ENCODE measurements at regions of chr14 and their contacts with region 1.

Region 1: GRCh38 chr14:34671716-34672115 is 41.8 kb upstream of the SNX6 start:
- DNase-seq: no peak
- ATAC-seq: no peak
- H3K4me3 ChIP-seq: no peak overlapping the region
- H3K27ac ChIP-seq: no peak overlapping the region
- H3K4me1 ChIP-seq: no peaks in the 10 kb centered on the region; the same call in 1 of the 2 replicates
- H3K27me3 ChIP-seq: no peaks in the 10 kb centered on the region
- CTCF ChIP-seq: no peak
- POLR2A ChIP-seq: no peak
- RAD21 ChIP-seq: no peak

Region 2: GRCh38 chr14:34522496-34522895 is 149.2 kb before region 1 on chr14:
- CTCF ChIA-PET with region 1: no interaction called
- POLR2A ChIA-PET with region 1: no interaction called
- dilution Hi-C with region 1: no loop called
- in situ Hi-C with region 1: no loop called
- intact Hi-C with region 1: no loop called
- DNase-seq: no peak
- ATAC-seq: no peak
- H3K4me3 ChIP-seq: no peak overlapping the region
- H3K27ac ChIP-seq: no peak overlapping the region
- H3K4me1 ChIP-seq: no peaks in the 10 kb centered on the region
- H3K27me3 ChIP-seq: no peaks in the 10 kb centered on the region
- CTCF ChIP-seq: no peak
- POLR2A ChIP-seq: no peak
- RAD21 ChIP-seq: no peak

Region 3: DNA sequence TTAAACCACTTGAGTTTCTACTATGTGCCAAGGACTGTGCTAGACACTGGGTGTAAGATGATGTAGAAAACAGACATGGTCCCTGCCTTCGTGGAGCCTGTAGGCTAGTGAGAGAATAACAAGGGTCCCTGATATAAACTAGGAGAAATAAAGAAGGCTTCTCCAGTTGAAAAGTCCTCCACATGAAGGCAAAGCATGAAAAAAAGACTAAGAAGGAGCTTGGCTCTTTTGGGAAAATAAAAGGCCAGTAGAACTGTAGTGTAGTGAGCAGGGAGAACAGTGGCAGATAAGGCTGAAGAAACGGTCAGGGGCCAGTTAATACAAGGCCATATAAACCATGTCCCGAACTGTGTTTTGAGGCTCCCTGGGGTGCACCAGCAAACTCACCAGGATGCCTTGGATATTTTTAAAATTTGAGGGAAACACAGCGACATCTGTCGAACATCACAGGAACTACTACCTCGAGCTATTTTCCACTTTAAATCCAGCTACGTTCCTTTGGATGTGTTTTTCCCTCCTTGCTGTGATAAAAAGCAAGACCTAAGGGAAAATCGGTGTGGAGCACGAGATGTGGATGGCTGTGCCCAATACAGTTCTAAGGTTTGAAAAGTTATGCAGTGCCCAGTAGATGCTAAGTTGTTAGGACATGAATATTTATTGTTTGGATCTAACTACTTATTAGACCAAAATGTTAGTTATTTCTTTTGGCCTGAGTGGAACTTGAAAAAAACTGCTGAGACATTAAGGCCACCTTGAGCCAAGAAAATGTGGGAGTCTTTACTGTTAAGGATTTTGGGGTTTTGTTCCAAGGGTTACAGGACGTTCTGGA is 51.2 kb after region 1 on chr14:
- CTCF ChIA-PET with region 1: interaction called, 11 read pairs
- POLR2A ChIA-PET with region 1: no interaction called
- dilution Hi-C with region 1: no loop called
- in situ Hi-C with region 1: no loop called
- intact Hi-C with region 1: loop called (anchors 1 kb)
- DNase-seq: peak; percentile 60
- ATAC-seq: peak; percentile 89
- H3K4me3 ChIP-seq: no peak overlapping the region
- H3K27ac ChIP-seq: no peak overlapping the region
- H3K4me1 ChIP-seq: peaks cover 2% of the 10 kb centered on the region; the same call in 1 of the 2 replicates
- H3K27me3 ChIP-seq: no peaks in the 10 kb centered on the region
- CTCF ChIP-seq: peak; percentile 73
- POLR2A ChIP-seq: no peak
- RAD21 ChIP-seq: peak; percentile 70

Region 4: DNA sequence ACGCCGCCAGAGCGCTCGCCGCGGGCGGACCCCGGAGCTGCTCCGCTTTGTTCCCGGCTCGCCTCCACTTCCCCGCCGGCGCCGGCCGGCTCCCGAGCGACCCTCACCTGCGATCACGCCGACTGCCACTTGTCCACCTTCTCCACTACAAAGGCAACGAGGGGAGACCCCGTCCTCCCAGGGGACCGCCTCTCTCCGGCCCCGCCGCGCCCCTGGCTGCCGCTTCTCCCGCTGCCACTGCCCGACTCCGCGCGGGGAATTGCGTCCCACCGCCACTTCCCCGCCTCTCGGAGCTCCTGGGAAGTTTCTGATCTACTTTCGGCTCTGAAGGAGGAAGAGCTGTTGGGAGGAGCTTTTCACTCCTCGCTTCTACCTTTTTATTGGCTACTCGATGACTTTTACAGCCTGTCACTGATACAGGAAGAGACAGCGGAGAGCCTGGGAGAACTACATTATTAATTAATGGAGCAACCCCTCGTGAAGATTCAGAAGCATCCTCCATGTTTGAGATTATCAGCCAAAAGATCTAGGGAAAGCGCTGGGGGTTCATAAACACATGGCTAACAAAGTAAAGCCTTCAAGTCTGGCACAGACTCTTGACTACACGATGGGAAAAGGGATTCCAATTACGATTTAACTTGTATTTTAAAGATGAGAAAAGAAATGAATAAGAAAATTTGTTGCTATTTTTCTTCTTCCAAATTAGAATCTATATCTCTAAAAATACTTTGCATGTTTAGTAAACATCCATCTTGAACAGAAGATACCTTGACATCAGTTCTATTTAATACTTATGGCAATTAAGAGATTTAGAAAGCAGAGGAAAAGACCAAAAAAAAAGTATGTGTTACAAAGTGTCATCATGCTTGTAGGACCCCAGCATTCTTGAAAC is 203.6 kb after region 1 on chr14 and contains the start of gene BAZ1A:
- CTCF ChIA-PET with region 1: no interaction called
- POLR2A ChIA-PET with region 1: no interaction called
- dilution Hi-C with region 1: no loop called
- in situ Hi-C with region 1: no loop called
- intact Hi-C with region 1: loop called (anchors 2 kb)
- DNase-seq: peak; percentile 91
- ATAC-seq: peak; percentile 81
- H3K4me3 ChIP-seq: peak within 1 kb of the TSS; percentile 96
- H3K27ac ChIP-seq: peak within 1 kb of the TSS; percentile 97
- H3K4me1 ChIP-seq: peaks cover 2% of the 10 kb centered on the region; the same call in 1 of the 2 replicates
- H3K27me3 ChIP-seq: no peaks in the 10 kb centered on the region
- CTCF ChIP-seq: 0 out of 2 replicates have a peak, but pooled peaks have one; percentile 8
- POLR2A ChIP-seq: peak; percentile 91
- RAD21 ChIP-seq: peak; percentile 9; the same call in 1 of the 2 replicates
- total RNA-seq, gene BAZ1A: 23.8 and 43.6 TPM in 2 replicates

Region 5: GRCh38 chr14:34982417-34983147 is 310.9 kb after region 1 on chr14 and contains the start of gene SRP54:
- CTCF ChIA-PET with region 1: no interaction called
- POLR2A ChIA-PET with region 1: no interaction called
- dilution Hi-C with region 1: no loop called
- in situ Hi-C with region 1: no loop called
- intact Hi-C with region 1: loop called (anchors 2 kb)
- DNase-seq: peak; percentile 98
- ATAC-seq: peak; percentile 94
- H3K4me3 ChIP-seq: peak within 1 kb of the TSS; percentile 58
- H3K27ac ChIP-seq: peak within 1 kb of the TSS; percentile 86
- H3K4me1 ChIP-seq: peaks cover 4% of the 10 kb centered on the region
- H3K27me3 ChIP-seq: no peaks in the 10 kb centered on the region
- CTCF ChIP-seq: peak; percentile 26; the same call in 1 of the 2 replicates
- POLR2A ChIP-seq: peak; percentile 90
- RAD21 ChIP-seq: peak; percentile 37
- total RNA-seq, gene SRP54: 63.3 and 109 TPM in 2 replicates

Measured in IMR-90 (cell line).